H1 (cell line): ENCODE measurements at regions of chr15 and their contacts with region 1.

Region 1: GRCh38 chr15:52193791-52194190 is 2.6 kb upstream of the GNB5 start:
- DNase-seq: no peak
- H3K4me3 ChIP-seq: no peak overlapping the region
- H3K27ac ChIP-seq: no peak overlapping the region
- H3K4me1 ChIP-seq: no peaks in the 10 kb centered on the region; a peak in 1 of 7 replicates
- H3K27me3 ChIP-seq: no peaks in the 10 kb centered on the region
- CTCF ChIP-seq: no peak
- EP300 ChIP-seq: no peak
- POLR2A ChIP-seq: no peak
- RAD21 ChIP-seq: no peak

Region 2: GRCh38 chr15:52144656-52145178 is 49.1 kb before region 1 on chr15:
- CTCF ChIA-PET with region 1: no interaction called
- POLR2A ChIA-PET with region 1: no interaction called
- DNase-seq: no peak
- H3K4me3 ChIP-seq: no peak overlapping the region
- H3K27ac ChIP-seq: no peak overlapping the region
- H3K4me1 ChIP-seq: peaks cover 0 to under 1% (median 0%) of the 10 kb centered on the region in 4 experiments; a peak in 3 of 7 replicates
- H3K27me3 ChIP-seq: no peaks in the 10 kb centered on the region
- CTCF ChIP-seq: no peak
- EP300 ChIP-seq: no peak
- POLR2A ChIP-seq: no peak
- RAD21 ChIP-seq: no peak

Region 3: GRCh38 chr15:52217186-52217585 is 23.4 kb after region 1 on chr15:
- CTCF ChIA-PET with region 1: interaction called, 10 read pairs
- POLR2A ChIA-PET with region 1: no interaction called
- DNase-seq: peak; percentile 27 to 72
- H3K4me3 ChIP-seq: no peak overlapping the region
- H3K27ac ChIP-seq: no peak overlapping the region
- H3K4me1 ChIP-seq: no peaks in the 10 kb centered on the region
- H3K27me3 ChIP-seq: no peaks in the 10 kb centered on the region
- CTCF ChIP-seq: peak; percentile 60 to 75 (median 72)
- EP300 ChIP-seq: no peak
- POLR2A ChIP-seq: no peak
- RAD21 ChIP-seq: peak; percentile 29 to 55; a peak in 3 of 4 replicates

Region 4: GRCh38 chr15:52233405-52233804 is 39.6 kb after region 1 on chr15:
- CTCF ChIA-PET with region 1: no interaction called
- POLR2A ChIA-PET with region 1: no interaction called
- DNase-seq: no peak
- H3K4me3 ChIP-seq: no peak overlapping the region
- H3K27ac ChIP-seq: no peak overlapping the region
- H3K4me1 ChIP-seq: no peaks in the 10 kb centered on the region
- H3K27me3 ChIP-seq: no peaks in the 10 kb centered on the region
- CTCF ChIP-seq: no peak
- EP300 ChIP-seq: no peak
- POLR2A ChIP-seq: no peak
- RAD21 ChIP-seq: no peak

Region 5: GRCh38 chr15:52246686-52247431 is 53.1 kb after region 1 on chr15:
- CTCF ChIA-PET with region 1: no interaction called
- POLR2A ChIA-PET with region 1: no interaction called
- DNase-seq: no peak
- H3K4me3 ChIP-seq: no peak overlapping the region
- H3K27ac ChIP-seq: no peak overlapping the region
- H3K4me1 ChIP-seq: no peaks in the 10 kb centered on the region
- H3K27me3 ChIP-seq: no peaks in the 10 kb centered on the region
- CTCF ChIP-seq: no peak
- EP300 ChIP-seq: no peak
- POLR2A ChIP-seq: no peak
- RAD21 ChIP-seq: no peak